SK-N-SH (cell line): ENCODE measurements at regions of chr14 and their contacts with region 1.

Region 1: GRCh38 chr14:52961060-52961639 is 10.3 kb upstream of the FERMT2 start:
- DNase-seq: peak; percentile 63
- H3K4me3 ChIP-seq: no peak overlapping the region; a peak in 1 of 4 replicates
- H3K27ac ChIP-seq: no peak overlapping the region
- H3K4me1 ChIP-seq: peaks cover 0 to 3% of the 10 kb centered on the region in 2 experiments; a peak in 1 of 4 replicates
- H3K27me3 ChIP-seq: no peaks in the 10 kb centered on the region
- CTCF ChIP-seq: peak; percentile 71
- EP300 ChIP-seq: no peak
- RAD21 ChIP-seq: peak; percentile 96

Region 2: GRCh38 chr14:52808101-52808500 is 153.0 kb before region 1 on chr14:
- CTCF ChIA-PET with region 1: interaction called, 12 read pairs
- POLR2A ChIA-PET with region 1: no interaction called
- DNase-seq: no peak
- H3K4me3 ChIP-seq: no peak overlapping the region
- H3K27ac ChIP-seq: no peak overlapping the region
- H3K4me1 ChIP-seq: no peaks in the 10 kb centered on the region
- H3K27me3 ChIP-seq: no peaks in the 10 kb centered on the region
- CTCF ChIP-seq: no peak
- EP300 ChIP-seq: no peak
- RAD21 ChIP-seq: no peak

Region 3: GRCh38 chr14:52824507-52824906 is 136.6 kb before region 1 on chr14:
- CTCF ChIA-PET with region 1: interaction called, 69 read pairs
- POLR2A ChIA-PET with region 1: no interaction called
- DNase-seq: no peak
- H3K4me3 ChIP-seq: no peak overlapping the region
- H3K27ac ChIP-seq: peak overlapping the region in 1 of 2 experiments; percentile 55; a peak in 2 of 4 replicates
- H3K4me1 ChIP-seq: peaks cover 4 to 13% of the 10 kb centered on the region in 2 experiments
- H3K27me3 ChIP-seq: no peaks in the 10 kb centered on the region
- CTCF ChIP-seq: no peak
- EP300 ChIP-seq: no peak
- RAD21 ChIP-seq: no peak

Region 4: GRCh38 chr14:52829527-52829926 is 131.6 kb before region 1 on chr14:
- CTCF ChIA-PET with region 1: interaction called, 69 read pairs
- POLR2A ChIA-PET with region 1: no interaction called
- DNase-seq: no peak
- H3K4me3 ChIP-seq: no peak overlapping the region
- H3K27ac ChIP-seq: no peak overlapping the region
- H3K4me1 ChIP-seq: peaks cover 20 to 32% of the 10 kb centered on the region in 2 experiments
- H3K27me3 ChIP-seq: no peaks in the 10 kb centered on the region
- CTCF ChIP-seq: no peak
- EP300 ChIP-seq: no peak
- RAD21 ChIP-seq: no peak

Region 5: GRCh38 chr14:52856139-52856538 is 105.0 kb before region 1 on chr14:
- CTCF ChIA-PET with region 1: no interaction called
- POLR2A ChIA-PET with region 1: no interaction called
- DNase-seq: no peak
- H3K4me3 ChIP-seq: no peak overlapping the region
- H3K27ac ChIP-seq: peak overlapping the region; percentile 11 to 35; a peak in 2 of 4 replicates
- H3K4me1 ChIP-seq: peaks cover 9 to 14% of the 10 kb centered on the region in 2 experiments; a peak in 3 of 4 replicates
- H3K27me3 ChIP-seq: no peaks in the 10 kb centered on the region
- CTCF ChIP-seq: no peak
- EP300 ChIP-seq: no peak
- RAD21 ChIP-seq: no peak

Region 6: GRCh38 chr14:52950898-52951689 is 10.1 kb before region 1 on chr14 and contains the start of gene FERMT2:
- CTCF ChIA-PET with region 1: interaction called, 27 read pairs
- POLR2A ChIA-PET with region 1: no interaction called
- DNase-seq: peak; percentile 98
- H3K4me3 ChIP-seq: peak within 1 kb of the TSS; percentile 95 to 96
- H3K27ac ChIP-seq: peak within 1 kb of the TSS; percentile 95 to 98
- H3K4me1 ChIP-seq: peaks cover 8 to 22% of the 10 kb centered on the region in 2 experiments
- H3K27me3 ChIP-seq: no peaks in the 10 kb centered on the region
- CTCF ChIP-seq: no peak
- EP300 ChIP-seq: 0 out of 4 replicates have a peak, but pooled peaks of 1 of the 2 experiments have one; percentile 26
- RAD21 ChIP-seq: no peak
- polyA plus RNA-seq, gene FERMT2: 40.1 and 54.5 TPM in 2 replicates

Region 7: GRCh38 chr14:53064461-53064860 is 103.3 kb after region 1 on chr14:
- CTCF ChIA-PET with region 1: no interaction called
- POLR2A ChIA-PET with region 1: no interaction called
- DNase-seq: no peak
- H3K4me3 ChIP-seq: no peak overlapping the region
- H3K27ac ChIP-seq: no peak overlapping the region
- H3K4me1 ChIP-seq: no peaks in the 10 kb centered on the region; a peak in 1 of 4 replicates
- H3K27me3 ChIP-seq: no peaks in the 10 kb centered on the region
- CTCF ChIP-seq: no peak
- EP300 ChIP-seq: no peak
- RAD21 ChIP-seq: no peak